ENCODE measurements at regions of chr12 and their contacts with region 1.

Region 1: GRCh38 chr12:68610370-68611093 is at the start of gene RAP1B:
- DNase-seq: peak; percentile 87
- ATAC-seq: peak; percentile 83
- H3K4me3 Mint-ChIP-seq: peak within 1 kb of the TSS; percentile 98
- H3K27ac Mint-ChIP-seq: peak within 1 kb of the TSS; percentile 99
- H3K4me1 Mint-ChIP-seq: peaks cover 34% of the 10 kb centered on the region
- H3K27me3 Mint-ChIP-seq: no peaks in the 10 kb centered on the region
- CTCF ChIP-seq: no peak
- total RNA-seq, gene RAP1B: 187 to 192 TPM

Region 2: DNA sequence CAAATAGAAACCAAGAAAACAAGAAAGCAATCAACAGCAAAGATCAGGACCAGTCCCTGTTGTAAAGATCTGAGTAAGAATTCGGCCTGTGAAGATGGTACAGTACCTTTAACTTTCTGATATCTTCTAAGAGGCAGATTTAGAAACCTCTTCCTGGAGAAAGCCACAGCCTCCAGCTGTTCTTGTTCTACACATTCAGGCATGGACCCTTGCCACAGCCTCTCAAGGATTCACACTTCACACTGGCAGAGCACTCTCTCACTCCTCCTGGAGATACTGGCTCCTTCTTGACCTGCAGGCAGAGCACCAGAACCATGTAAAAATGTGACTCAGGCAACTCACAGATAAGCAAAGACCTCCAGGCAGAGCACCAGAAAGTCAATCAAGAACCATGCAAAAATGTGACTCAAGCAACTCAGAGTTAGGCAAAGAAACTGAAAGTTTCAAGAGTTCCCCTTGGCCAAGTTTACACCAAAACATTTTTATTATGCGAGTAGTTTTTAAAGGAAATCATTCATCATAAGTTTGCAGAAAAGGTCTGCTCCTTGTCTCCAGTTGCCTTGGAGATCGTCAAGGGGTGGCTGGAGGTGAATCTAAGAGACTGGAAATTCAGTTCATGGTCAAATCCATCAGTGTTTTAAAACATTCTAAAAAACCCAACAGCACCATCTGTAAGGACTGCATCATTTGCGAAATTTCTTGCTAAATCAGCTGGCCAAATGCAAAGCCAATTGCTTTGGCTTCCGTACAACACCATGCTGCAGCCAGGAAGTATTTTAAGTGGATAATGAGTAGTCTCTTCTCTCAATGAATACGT is 159.1 kb before region 1 on chr12:
- CTCF ChIA-PET with region 1: no interaction called
- POLR2A ChIA-PET with region 1: interaction called, 4 read pairs
- intact Hi-C with region 1: loop called (anchors 5 kb)
- DNase-seq: peak; percentile 66
- ATAC-seq: peak; percentile 82
- H3K4me3 Mint-ChIP-seq: peak overlapping the region; percentile 54
- H3K27ac Mint-ChIP-seq: peak overlapping the region; percentile 90
- H3K4me1 Mint-ChIP-seq: peaks cover 88% of the 10 kb centered on the region
- H3K27me3 Mint-ChIP-seq: no peaks in the 10 kb centered on the region
- CTCF ChIP-seq: no peak

Region 3: DNA sequence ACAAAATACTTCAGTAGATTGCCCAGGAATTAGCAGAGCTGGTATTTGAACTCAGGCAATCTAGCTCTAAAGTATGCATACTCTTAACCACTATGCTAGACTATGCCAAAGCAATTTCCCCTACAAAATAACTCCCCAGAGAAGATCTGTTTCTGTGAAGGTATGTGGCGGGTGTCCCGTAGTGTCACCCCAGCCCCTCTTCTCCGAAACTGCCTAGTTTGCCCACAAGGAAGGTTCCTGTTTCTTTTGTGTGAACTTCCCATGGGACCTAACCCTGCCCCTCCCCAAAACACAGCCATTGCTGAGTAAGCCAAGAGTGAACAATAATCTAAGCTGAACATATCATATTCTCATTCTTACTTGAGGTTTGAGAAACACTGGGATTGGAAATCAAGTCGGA is 15.3 kb before region 1 on chr12:
- CTCF ChIA-PET with region 1: interaction called, 5 read pairs
- POLR2A ChIA-PET with region 1: interaction called, 11 read pairs
- intact Hi-C with region 1: no loop called
- DNase-seq: no peak
- ATAC-seq: no peak
- H3K4me3 Mint-ChIP-seq: no peak overlapping the region
- H3K27ac Mint-ChIP-seq: peak overlapping the region; percentile 53
- H3K4me1 Mint-ChIP-seq: peaks cover 62% of the 10 kb centered on the region
- H3K27me3 Mint-ChIP-seq: no peaks in the 10 kb centered on the region
- CTCF ChIP-seq: no peak

Region 4: DNA sequence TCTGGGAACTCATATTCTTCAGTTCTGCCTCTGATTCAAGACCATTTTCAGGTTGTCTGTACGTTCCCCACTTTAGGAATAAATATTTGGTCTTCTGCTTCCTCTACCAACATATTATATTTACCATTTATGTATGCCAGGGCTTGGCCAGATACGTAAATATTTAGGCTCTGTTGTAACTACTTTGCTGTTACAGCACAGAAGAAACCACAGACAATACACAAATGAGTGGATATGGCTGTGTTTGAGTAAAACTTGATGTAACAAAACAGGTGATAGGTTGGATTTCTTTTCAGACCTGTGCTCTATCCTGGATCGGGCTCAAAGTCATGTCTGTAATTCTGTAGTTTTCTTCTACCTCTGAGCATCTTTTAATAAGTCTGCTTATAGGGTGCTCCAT is 37.6 kb after region 1 on chr12:
- CTCF ChIA-PET with region 1: no interaction called
- POLR2A ChIA-PET with region 1: interaction called, 3 read pairs
- intact Hi-C with region 1: loop called (anchors 5 kb)
- DNase-seq: no peak
- ATAC-seq: peak; percentile 76
- H3K4me3 Mint-ChIP-seq: no peak overlapping the region
- H3K27ac Mint-ChIP-seq: peak overlapping the region; percentile 65
- H3K4me1 Mint-ChIP-seq: peaks cover 50% of the 10 kb centered on the region
- H3K27me3 Mint-ChIP-seq: no peaks in the 10 kb centered on the region
- CTCF ChIP-seq: no peak

Measured in activated CD8-positive, alpha-beta T cell treated with anti-CD3 and anti-CD28 coated beads for 36 hours (primary cell).